ENCODE measurements at regions of chr4 and their contacts with region 1.

Region 1: DNA sequence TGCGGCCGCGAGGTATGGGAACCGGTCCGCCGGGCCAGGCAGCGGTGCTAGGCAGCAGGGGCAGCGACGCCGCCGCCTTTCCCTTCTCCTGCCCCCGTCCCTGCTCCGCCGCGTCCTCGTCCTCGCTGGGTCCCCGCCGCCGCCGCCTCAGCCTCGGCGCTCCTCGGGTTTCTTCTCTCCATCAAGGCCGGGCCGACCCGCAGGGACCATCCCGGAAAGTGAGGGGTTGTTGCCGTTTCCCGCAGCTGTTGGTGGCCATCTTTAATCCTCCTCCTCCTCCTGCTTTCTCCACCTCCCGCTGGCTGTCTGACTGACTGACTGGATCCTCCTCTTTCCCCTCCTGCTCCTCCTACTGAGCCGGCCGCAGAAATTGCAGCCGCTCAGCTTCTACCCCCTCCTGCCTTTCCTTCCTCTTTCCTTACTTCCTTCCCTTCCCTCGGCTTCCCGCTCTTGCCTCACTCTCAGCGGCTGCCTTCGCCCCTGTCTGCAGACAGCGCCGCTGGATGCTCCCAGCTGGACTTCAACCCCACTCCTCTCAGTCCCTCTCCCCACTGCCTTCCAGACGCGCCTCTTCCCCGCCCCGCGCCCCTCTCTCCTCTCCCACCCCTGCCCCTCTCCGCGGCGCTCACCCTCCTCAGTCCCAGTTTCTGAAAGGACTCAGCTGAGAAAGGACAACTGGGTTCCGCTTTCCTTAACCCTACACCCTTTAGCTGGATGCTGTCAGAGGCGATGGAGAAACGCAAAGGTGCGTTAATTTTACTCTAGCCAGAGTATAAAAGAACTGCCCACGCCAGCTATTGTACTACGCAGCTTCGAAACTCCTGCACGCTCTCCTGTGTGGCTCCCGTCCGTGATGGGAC is at the start of gene WDFY3:
- DNase-seq: peak; percentile 83 to 90
- ATAC-seq: peak; percentile 92 to 94 (median 93)
- H3K4me3 ChIP-seq: peak within 1 kb of the TSS; percentile 89
- H3K27ac ChIP-seq: peak within 1 kb of the TSS; percentile 95
- H3K4me1 ChIP-seq: peaks cover 19% of the 10 kb centered on the region
- H3K27me3 ChIP-seq: no peaks in the 10 kb centered on the region
- CTCF ChIP-seq: no peak
- total RNA-seq, gene WDFY3: 38.2 to 54.2 (median 49.0) TPM

Region 2: DNA sequence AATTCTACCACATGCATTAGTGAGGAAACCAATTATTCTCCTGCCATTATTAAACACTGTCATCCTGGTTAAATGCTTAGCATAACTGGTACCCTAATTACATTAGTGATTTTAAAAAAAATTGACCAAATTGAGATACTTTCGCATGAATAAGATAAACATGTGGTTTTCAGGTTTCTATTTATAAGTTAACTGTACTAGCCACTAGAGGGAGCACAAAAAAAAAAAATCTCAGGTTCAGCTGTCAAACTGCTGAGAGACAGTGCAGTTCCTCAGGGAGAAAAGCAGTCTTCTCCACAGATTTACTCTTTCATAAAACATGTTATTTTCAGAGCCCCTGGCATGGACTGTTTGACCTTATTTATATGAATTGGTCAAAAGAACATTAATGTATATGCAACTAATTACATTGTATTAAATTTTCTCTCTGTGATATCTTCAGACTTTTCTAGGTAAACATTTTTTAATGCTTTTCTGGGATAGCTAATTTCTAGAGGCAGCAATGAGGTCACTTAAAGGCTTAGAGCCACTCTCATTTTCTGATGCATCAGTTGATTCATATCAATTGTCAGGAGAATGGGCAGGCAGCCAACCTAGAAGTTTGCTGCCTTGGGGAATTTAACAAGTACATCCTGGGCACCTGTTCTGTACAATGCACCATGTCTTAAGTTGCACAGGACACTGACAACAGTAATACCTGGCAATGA is 216.2 kb before region 1 on chr4:
- intact Hi-C with region 1: loop called (anchors 2 to 5 kb)
- DNase-seq: no peak
- ATAC-seq: peak in 2 of 4 donors; percentile 63 to 86
- H3K4me3 ChIP-seq: no peak overlapping the region
- H3K27ac ChIP-seq: no peak overlapping the region
- H3K4me1 ChIP-seq: no peaks in the 10 kb centered on the region
- H3K27me3 ChIP-seq: no peaks in the 10 kb centered on the region
- CTCF ChIP-seq: peak; percentile 62

Region 3: DNA sequence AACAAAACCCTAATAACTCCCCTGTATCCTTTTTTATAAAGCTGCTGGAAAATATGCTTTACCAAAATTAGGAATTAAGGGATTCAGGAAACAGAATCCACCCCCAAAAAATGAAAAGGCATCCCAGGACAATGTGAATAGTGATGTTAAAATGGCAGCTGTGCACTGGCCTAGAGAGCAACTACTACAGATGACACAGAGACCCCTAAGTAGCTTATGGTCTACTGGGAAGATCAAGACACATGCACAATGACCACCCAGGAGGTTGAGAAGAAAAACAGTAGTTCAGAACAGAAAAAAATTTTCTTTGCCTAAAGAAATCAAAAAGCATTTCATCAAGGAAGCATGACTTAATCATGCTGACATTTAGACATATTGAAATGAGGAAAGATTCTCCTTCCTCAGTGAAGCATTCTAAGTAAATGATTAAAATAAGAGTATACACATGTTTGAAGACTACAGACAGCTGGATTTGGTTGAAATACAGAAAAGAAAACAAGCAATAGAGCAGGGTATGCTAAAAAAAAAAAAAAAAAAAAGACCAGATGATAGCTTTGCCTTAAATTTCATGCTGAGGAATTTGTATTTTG is 117.5 kb before region 1 on chr4:
- intact Hi-C with region 1: loop called (anchors 5 to 10 kb)
- DNase-seq: no peak
- ATAC-seq: no peak
- H3K4me3 ChIP-seq: no peak overlapping the region
- H3K27ac ChIP-seq: peak overlapping the region; percentile 39
- H3K4me1 ChIP-seq: peaks cover 6% of the 10 kb centered on the region
- H3K27me3 ChIP-seq: no peaks in the 10 kb centered on the region
- CTCF ChIP-seq: no peak

Measured in psoas muscle (tissue), 8 donors.